Right cardiac atrium (tissue), 5 donors: ENCODE measurements at regions of chr10 and their contacts with region 1.

Region 1: DNA sequence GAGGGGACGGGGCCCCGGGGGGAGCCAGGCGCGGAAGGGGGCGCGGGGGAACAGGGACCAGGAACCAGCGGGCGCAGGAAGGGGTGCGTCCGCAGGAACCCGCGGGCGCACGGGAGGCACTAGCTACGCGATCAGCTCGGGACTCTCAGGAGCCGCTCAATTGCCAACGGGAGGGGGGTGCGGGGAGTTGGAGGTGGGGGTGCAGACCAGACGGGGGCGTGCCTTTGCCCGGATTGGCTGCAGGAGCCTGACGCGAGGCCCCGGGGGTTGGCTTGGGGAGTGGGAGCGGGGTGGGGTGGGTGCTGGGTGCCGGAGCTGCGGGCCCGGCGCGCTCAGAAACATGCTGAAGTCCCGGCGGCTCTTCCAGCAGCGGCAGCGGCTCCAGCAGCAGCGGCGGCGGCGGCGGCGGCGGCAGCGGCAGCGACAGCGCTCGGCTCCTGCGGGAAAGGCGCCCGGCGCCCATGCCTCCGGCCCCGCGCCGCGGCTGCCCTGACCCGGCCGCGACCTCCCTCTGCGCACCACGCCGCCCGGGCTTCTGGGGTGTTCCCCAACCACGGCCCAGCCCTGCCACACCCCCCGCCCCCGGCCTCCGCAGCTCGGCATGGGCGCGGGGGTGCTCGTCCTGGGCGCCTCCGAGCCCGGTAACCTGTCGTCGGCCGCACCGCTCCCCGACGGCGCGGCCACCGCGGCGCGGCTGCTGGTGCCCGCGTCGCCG is at the start of gene ADRB1:
- DNase-seq: peak; percentile 94 to 98 (median 98)
- ATAC-seq: peak; percentile 94 to 95
- H3K4me3 ChIP-seq: peak within 1 kb of the TSS; percentile 61
- H3K27ac ChIP-seq: peak within 1 kb of the TSS; percentile 97
- H3K4me1 ChIP-seq: no peaks in the 10 kb centered on the region
- H3K27me3 ChIP-seq: no peaks in the 10 kb centered on the region
- total RNA-seq, gene ADRB1: 39.5 to 60.8 (median 47.1) TPM

Region 2: GRCh38 chr10:113854011-113854760 is 189.5 kb before region 1 on chr10 and contains the starts of genes DCLRE1A and NHLRC2:
- intact Hi-C with region 1: loop called in 1 of 4 experiments (anchors 10 kb)
- DNase-seq: peak; percentile 82 to 93 (median 92)
- ATAC-seq: peak; percentile 90 to 93
- H3K4me3 ChIP-seq: peak within 1 kb of the TSS; percentile 57
- H3K27ac ChIP-seq: peak within 1 kb of the TSS; percentile 95
- H3K4me1 ChIP-seq: peaks cover 2% of the 10 kb centered on the region
- H3K27me3 ChIP-seq: no peaks in the 10 kb centered on the region
- total RNA-seq, gene DCLRE1A: 5.0 to 7.3 (median 6.6) TPM
- total RNA-seq, gene NHLRC2: 62.3 to 79.8 (median 69.9) TPM

Region 3: DNA sequence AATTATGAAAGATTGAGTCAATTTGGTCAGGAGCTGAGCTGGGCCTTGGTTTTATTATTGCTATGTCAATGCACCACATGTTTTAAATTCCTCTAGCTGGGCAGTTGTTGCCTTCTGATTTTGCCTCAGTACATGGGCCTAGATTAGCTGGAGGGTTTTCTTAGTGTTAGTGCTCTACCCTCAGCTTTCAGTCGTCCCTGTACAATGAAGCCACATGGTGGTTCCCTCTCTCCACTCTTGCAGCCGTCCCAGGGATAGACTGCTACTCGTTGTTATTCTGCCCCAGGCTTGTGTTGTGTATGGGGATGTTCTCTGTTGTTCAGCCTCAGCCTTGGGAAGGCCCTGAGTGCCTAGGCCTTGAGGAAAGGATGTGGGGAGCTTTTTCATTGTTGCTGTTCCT is 152.2 kb before region 1 on chr10:
- intact Hi-C with region 1: loop called in 2 of 4 experiments (anchors 10 kb)
- DNase-seq: no peak
- ATAC-seq: peak; percentile 73 to 80
- H3K4me3 ChIP-seq: no peak overlapping the region
- H3K27ac ChIP-seq: peak overlapping the region; percentile 86
- H3K4me1 ChIP-seq: no peaks in the 10 kb centered on the region
- H3K27me3 ChIP-seq: no peaks in the 10 kb centered on the region

Region 4: GRCh38 chr10:113916053-113916452 is 127.6 kb before region 1 on chr10:
- intact Hi-C with region 1: loop called in 1 of 4 experiments (anchors 10 kb)
- DNase-seq: no peak
- ATAC-seq: no peak
- H3K4me3 ChIP-seq: no peak overlapping the region
- H3K27ac ChIP-seq: no peak overlapping the region
- H3K4me1 ChIP-seq: no peaks in the 10 kb centered on the region
- H3K27me3 ChIP-seq: no peaks in the 10 kb centered on the region

Region 5: GRCh38 chr10:114095559-114096337 is 52.1 kb after region 1 on chr10:
- intact Hi-C with region 1: loop called in 2 of 4 experiments (anchors 5 to 10 kb)
- DNase-seq: no peak
- ATAC-seq: no peak
- H3K4me3 ChIP-seq: no peak overlapping the region
- H3K27ac ChIP-seq: no peak overlapping the region
- H3K4me1 ChIP-seq: peaks cover 5% of the 10 kb centered on the region
- H3K27me3 ChIP-seq: no peaks in the 10 kb centered on the region

Region 6: DNA sequence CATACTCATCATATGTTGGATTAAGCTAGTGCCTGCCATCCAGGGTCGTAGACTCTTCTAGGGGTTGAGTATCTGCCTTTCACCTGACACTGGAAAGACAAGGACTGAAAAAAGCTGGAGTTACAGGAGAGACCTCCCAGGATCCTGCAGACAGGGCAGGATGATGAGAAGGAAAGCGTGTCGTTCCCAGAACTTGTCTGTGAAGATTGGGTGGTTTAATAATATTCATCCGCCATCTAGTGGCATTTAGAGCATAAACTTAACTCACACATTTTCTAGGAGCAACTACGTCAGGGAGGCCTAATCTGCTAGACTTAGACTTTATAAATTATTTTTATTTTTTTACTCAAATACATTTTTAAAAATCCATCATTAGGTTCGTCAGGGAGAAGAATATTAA is 59.6 kb after region 1 on chr10:
- intact Hi-C with region 1: loop called in 2 of 4 experiments (anchors 5 to 10 kb)
- DNase-seq: no peak
- ATAC-seq: peak; percentile 55 to 58
- H3K4me3 ChIP-seq: no peak overlapping the region
- H3K27ac ChIP-seq: no peak overlapping the region
- H3K4me1 ChIP-seq: peaks cover 5% of the 10 kb centered on the region
- H3K27me3 ChIP-seq: no peaks in the 10 kb centered on the region